ENCODE measurements at regions of chr14 and their contacts with region 1.

Region 1: DNA sequence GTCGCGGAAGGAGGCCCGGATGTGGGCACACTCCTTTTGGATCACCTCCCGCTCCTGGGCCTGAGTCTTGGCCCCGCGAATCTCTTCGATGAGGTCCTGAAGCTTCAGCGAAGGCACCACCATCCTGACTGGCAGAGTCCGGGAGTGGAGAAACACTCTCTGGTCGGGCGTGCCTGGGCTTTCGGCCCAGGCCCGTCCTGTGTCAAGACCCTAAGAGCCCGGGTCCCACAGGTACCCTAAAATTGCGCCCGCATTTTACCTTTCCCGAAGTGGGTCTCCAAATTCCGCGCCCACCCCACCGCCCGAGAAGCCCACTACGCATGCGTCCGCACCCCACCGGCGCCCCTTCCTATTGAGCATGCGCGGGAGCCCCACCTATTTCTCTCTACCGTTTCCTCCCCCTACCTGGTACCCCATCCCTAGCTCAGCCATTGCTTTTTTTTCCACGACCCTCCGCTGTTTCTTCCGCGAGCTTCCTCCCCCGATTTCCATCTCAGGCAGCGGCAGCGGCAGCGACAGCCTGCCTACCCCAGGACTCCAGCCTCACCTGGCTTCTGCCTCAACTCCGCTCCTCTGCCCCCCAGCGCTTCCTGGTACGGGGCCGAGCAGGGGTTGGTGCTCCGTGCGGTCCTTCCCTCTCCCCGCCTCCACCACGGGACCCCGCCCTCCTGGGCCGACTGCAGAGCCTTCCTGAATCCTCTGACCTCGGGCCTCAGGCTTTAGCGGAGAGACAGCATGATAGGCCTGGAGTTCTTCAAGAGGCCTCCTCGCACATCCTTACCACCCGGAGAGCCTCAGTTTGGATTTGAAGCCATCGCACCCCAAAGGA is at the start of gene AP1G2:
- DNase-seq: peak; percentile 96
- H3K4me3 ChIP-seq: peak within 1 kb of the TSS; percentile 44 to 75 (median 58)
- H3K27ac ChIP-seq: peak within 1 kb of the TSS; percentile 81 to 87 (median 84)
- H3K4me1 ChIP-seq: peaks cover 4 to 19% (median 13%) of the 10 kb centered on the region in 4 donors
- H3K27me3 ChIP-seq: no peaks in the 10 kb centered on the region
- CTCF ChIP-seq: no peak
- EP300 ChIP-seq: no peak
- POLR2A ChIP-seq: peak; percentile 91
- total RNA-seq, gene AP1G2: 163 to 508 (median 237) TPM

Region 2: DNA sequence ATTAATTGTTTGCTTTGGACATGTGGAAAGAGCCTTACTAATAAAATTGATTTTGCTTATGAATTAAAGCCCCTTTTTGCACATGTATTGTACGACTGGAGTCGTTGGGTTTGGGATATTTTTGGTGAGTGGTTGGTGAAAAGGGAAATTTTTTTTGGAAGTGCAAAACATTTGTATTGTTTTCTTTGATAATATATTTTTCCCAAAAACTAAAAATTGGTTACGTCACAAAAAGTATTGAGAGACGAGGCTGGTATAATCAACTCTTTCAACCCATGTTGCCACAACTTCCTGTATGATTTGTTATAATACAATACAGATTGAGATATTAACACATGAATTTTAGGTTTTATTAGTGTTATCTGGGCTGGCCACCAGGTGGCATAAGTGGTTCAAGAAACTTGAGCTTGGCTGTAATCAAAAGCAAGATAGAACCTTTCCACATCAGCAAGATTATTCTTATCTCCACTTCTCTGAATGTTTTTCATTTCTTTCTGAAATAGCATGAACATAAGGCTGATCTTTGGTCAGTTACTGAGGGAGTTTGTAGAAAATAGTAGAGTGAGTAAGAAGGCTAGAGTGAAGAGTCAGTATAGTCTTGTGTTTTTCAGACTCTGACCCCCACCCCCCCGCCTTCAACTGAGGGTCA is 89.2 kb before region 1 on chr14:
- in situ Hi-C with region 1: loop called in 2 of 4 experiments (anchors 5 to 10 kb)
- intact Hi-C with region 1: loop called (anchors 2 kb)
- DNase-seq: peak; percentile 51
- H3K4me3 ChIP-seq: no peak overlapping the region
- H3K27ac ChIP-seq: no peak overlapping the region
- H3K4me1 ChIP-seq: no peaks in the 10 kb centered on the region
- H3K27me3 ChIP-seq: no peaks in the 10 kb centered on the region
- CTCF ChIP-seq: peak; percentile 65 to 77 (median 69)
- EP300 ChIP-seq: no peak
- POLR2A ChIP-seq: no peak

Region 3: DNA sequence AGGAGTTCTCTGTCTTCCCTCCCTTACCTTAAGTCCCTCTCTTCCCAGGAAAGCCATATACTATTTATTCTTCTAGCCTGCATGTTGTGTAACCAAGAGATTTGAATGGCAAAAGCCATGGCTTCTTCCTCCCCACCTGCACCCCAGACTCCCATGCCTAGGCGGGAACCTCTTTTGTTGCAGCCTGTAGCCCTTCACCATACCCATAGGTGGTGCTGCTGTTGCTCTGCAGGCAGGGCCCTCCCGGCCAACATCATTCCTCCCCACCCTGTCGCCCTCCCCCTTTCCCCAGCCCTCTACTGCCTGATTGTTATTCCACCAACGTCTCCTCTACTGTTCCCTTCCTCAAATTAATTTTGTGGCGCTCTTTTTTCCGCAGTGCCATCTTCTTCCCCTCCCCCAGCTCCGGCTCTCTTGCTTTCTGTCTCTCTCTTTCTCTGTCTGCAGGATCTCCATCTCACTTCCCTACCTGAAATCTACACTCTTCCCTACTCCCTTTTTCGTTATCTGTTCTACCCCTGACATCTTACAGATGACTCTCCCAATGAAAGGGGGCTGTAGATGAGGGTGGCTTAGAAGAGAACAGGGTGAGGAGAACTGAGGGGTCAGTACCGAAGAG is 84.1 kb before region 1 on chr14:
- in situ Hi-C with region 1: loop called in 2 of 4 experiments (anchors 5 to 10 kb)
- intact Hi-C with region 1: loop called (anchors 2 kb)
- DNase-seq: no peak
- H3K4me3 ChIP-seq: no peak overlapping the region
- H3K27ac ChIP-seq: no peak overlapping the region
- H3K4me1 ChIP-seq: no peaks in the 10 kb centered on the region
- H3K27me3 ChIP-seq: no peaks in the 10 kb centered on the region
- CTCF ChIP-seq: peak in 2 of 5 experiments; percentile 8 to 9
- EP300 ChIP-seq: no peak
- POLR2A ChIP-seq: no peak

Region 4: GRCh38 chr14:23551164-23551949 is 16.0 kb before region 1 on chr14 and contains the start of gene ZFHX2:
- in situ Hi-C with region 1: no loop called
- intact Hi-C with region 1: no loop called
- DNase-seq: peak; percentile 88
- H3K4me3 ChIP-seq: peak within 1 kb of the TSS; percentile 49 to 76 (median 64)
- H3K27ac ChIP-seq: peak within 1 kb of the TSS; percentile 19 to 71 (median 56)
- H3K4me1 ChIP-seq: peaks cover 6 to 21% (median 16%) of the 10 kb centered on the region in 4 donors
- H3K27me3 ChIP-seq: peaks cover 9% of the 10 kb centered on the region
- CTCF ChIP-seq: no peak
- EP300 ChIP-seq: no peak
- POLR2A ChIP-seq: no peak
- total RNA-seq, gene ZFHX2: 0.20 to 1.1 (median 0.68) TPM

Measured in transverse colon (tissue), 4 donors.